ENCODE measurements at regions of chr1 and their contacts with region 1.

Region 1: GRCh38 chr1:56578963-56579875 is at the start of gene PLPP3:
- DNase-seq: peak; percentile 98
- H3K4me3 ChIP-seq: peak within 1 kb of the TSS; percentile 58 to 94 (median 84)
- H3K27ac ChIP-seq: peak within 1 kb of the TSS; percentile 90 to 95 (median 92)
- H3K4me1 ChIP-seq: peaks cover 9 to 46% (median 38%) of the 10 kb centered on the region in 4 donors
- H3K27me3 ChIP-seq: no peaks in the 10 kb centered on the region
- CTCF ChIP-seq: peak; percentile 50 to 53 (median 50)
- EP300 ChIP-seq: no peak
- POLR2A ChIP-seq: peak; percentile 88
- total RNA-seq, gene PLPP3: 138 to 244 (median 181) TPM

Region 2: DNA sequence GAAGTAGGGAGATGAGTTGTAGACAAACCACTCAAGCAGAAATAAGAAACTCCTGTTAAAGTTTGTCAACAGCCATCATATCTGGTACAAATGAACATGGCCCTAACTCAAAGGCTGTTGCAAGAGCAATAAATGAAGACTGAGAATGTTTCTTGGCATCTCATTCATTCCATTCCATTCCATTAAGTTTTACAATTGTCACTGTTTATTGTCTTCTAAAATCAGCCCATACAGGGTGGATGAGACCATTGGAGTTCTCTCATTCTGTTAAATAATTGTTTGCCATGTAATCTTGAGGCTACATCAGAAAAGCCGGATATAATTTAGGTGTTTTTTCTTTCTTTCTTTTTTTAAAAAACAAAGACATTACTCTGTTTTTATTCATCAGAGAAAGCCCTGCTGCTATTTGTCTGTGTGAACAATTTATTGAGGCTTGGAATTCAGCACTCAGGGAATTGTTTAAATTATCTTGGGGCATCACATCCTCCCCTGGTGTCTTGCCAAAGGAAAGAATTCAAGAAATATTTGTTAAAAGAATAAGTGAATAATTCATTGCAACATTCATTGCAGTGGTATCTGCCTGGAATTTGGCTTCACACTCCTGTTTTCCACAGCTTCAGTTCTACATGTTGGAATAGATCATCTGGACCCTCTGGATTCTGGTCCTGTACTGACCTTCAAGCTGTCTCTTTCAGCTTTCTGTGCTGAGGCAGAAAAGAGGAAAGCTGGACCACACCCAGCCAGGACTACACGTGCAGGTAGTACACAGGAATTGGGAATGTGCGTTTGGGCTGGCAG is 604.3 kb before region 1 on chr1:
- intact Hi-C with region 1: loop called (anchors 5 kb)
- DNase-seq: no peak
- H3K4me3 ChIP-seq: no peak overlapping the region
- H3K27ac ChIP-seq: peak overlapping the region; percentile 25 to 75 (median 61)
- H3K4me1 ChIP-seq: peaks cover 0 to 36% (median 30%) of the 10 kb centered on the region in 4 donors
- H3K27me3 ChIP-seq: no peaks in the 10 kb centered on the region
- CTCF ChIP-seq: no peak
- EP300 ChIP-seq: no peak
- POLR2A ChIP-seq: no peak

Region 3: GRCh38 chr1:56074007-56074651 is 505.1 kb before region 1 on chr1:
- intact Hi-C with region 1: loop called (anchors 10 kb)
- DNase-seq: no peak
- H3K4me3 ChIP-seq: no peak overlapping the region
- H3K27ac ChIP-seq: peak overlapping the region; percentile 48 to 77 (median 63)
- H3K4me1 ChIP-seq: peaks cover 18 to 25% (median 23%) of the 10 kb centered on the region in 4 donors
- H3K27me3 ChIP-seq: no peaks in the 10 kb centered on the region
- CTCF ChIP-seq: no peak
- EP300 ChIP-seq: no peak
- POLR2A ChIP-seq: no peak

Region 4: GRCh38 chr1:56416471-56416882 is 162.7 kb before region 1 on chr1:
- intact Hi-C with region 1: no loop called
- DNase-seq: no peak
- H3K4me3 ChIP-seq: no peak overlapping the region
- H3K27ac ChIP-seq: no peak overlapping the region
- H3K4me1 ChIP-seq: peaks cover 0 to 12% (median 5%) of the 10 kb centered on the region in 4 donors
- H3K27me3 ChIP-seq: no peaks in the 10 kb centered on the region
- CTCF ChIP-seq: no peak
- EP300 ChIP-seq: no peak
- POLR2A ChIP-seq: no peak

Region 5: GRCh38 chr1:56477164-56478111 is 101.8 kb before region 1 on chr1:
- intact Hi-C with region 1: loop called (anchors 10 kb)
- DNase-seq: peak; percentile 94
- H3K4me3 ChIP-seq: peak overlapping the region; percentile 64 to 72 (median 69)
- H3K27ac ChIP-seq: peak overlapping the region; percentile 91 to 95 (median 94)
- H3K4me1 ChIP-seq: peaks cover 11 to 36% (median 28%) of the 10 kb centered on the region in 4 donors
- H3K27me3 ChIP-seq: no peaks in the 10 kb centered on the region
- CTCF ChIP-seq: no peak
- EP300 ChIP-seq: no peak
- POLR2A ChIP-seq: no peak

Region 6: GRCh38 chr1:57206038-57206437 is 626.8 kb after region 1 on chr1:
- intact Hi-C with region 1: no loop called
- DNase-seq: no peak
- H3K4me3 ChIP-seq: no peak overlapping the region
- H3K27ac ChIP-seq: no peak overlapping the region
- H3K4me1 ChIP-seq: no peaks in the 10 kb centered on the region
- H3K27me3 ChIP-seq: no peaks in the 10 kb centered on the region
- CTCF ChIP-seq: no peak
- EP300 ChIP-seq: no peak
- POLR2A ChIP-seq: no peak